ENCODE measurements at regions of chr17 and their contacts with region 1.

Region 1: GRCh38 chr17:57051886-57052361 is 33.1 kb upstream of the AKAP1 start:
- DNase-seq: no peak
- ATAC-seq: no peak
- H3K4me3 ChIP-seq: no peak overlapping the region
- H3K27ac ChIP-seq: no peak overlapping the region
- H3K4me1 ChIP-seq: peaks cover 7% of the 10 kb centered on the region
- H3K27me3 ChIP-seq: no peaks in the 10 kb centered on the region
- CTCF ChIP-seq: no peak

Region 2: DNA sequence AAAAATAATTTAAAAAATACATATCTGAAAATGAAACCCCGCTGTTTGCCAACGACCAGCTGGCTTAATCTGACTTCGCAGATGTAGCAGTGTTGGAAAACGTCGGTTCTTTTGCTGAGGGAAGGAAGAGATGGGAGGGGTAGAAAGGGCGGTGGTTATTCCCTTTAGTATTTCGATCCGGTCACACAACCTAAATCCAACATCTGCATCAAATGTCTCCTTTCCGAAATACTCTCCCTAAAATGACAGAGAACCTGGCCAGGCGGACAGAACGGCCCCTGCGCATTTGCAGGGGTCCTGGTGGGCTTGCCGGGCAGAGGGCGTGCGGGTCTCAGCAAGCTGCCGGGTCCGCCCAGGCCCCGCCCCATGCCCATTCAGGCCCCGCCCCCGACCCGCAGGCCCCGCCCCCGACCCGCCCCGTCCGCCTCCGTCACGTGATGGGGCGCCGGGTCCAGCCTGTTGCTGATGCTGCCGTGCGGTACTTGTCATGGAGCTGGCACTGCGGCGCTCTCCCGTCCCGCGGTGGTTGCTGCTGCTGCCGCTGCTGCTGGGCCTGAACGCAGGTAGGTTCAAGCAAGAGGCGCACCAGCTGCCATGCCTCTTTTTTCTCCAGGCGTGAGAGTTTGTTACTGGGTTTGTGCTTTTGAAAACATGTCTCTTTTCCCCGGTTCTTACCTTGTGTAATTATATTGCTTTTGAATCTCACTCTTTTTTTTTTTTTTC is 74.1 kb before region 1 on chr17 and contains the start of gene SCPEP1:
- CTCF ChIA-PET with region 1: interaction called, 5 read pairs
- POLR2A ChIA-PET with region 1: no interaction called
- intact Hi-C with region 1: loop called (anchors 1 kb)
- DNase-seq: peak; percentile 81
- ATAC-seq: peak; percentile 94
- H3K4me3 ChIP-seq: peak within 1 kb of the TSS; percentile 85
- H3K27ac ChIP-seq: no peak within 1 kb of the TSS
- H3K4me1 ChIP-seq: peaks cover 21% of the 10 kb centered on the region
- H3K27me3 ChIP-seq: no peaks in the 10 kb centered on the region
- CTCF ChIP-seq: no peak
- total RNA-seq, gene SCPEP1: 56.0 and 73.3 TPM in 2 replicates

Region 3: GRCh38 chr17:57009737-57010445 is 42.0 kb before region 1 on chr17:
- CTCF ChIA-PET with region 1: interaction called, 7 read pairs
- POLR2A ChIA-PET with region 1: no interaction called
- intact Hi-C with region 1: loop called (anchors 1 kb)
- DNase-seq: peak; percentile 78
- ATAC-seq: peak; percentile 96
- H3K4me3 ChIP-seq: peak overlapping the region; percentile 36
- H3K27ac ChIP-seq: no peak overlapping the region
- H3K4me1 ChIP-seq: peaks cover 3% of the 10 kb centered on the region; the same call in 1 of the 2 replicates
- H3K27me3 ChIP-seq: no peaks in the 10 kb centered on the region
- CTCF ChIP-seq: peak; percentile 88

Region 4: GRCh38 chr17:57016747-57017082 is 35.2 kb before region 1 on chr17:
- CTCF ChIA-PET with region 1: interaction called, 8 read pairs
- POLR2A ChIA-PET with region 1: no interaction called
- intact Hi-C with region 1: loop called (anchors 1 kb)
- DNase-seq: peak; percentile 99
- ATAC-seq: peak; percentile 90
- H3K4me3 ChIP-seq: no peak overlapping the region
- H3K27ac ChIP-seq: peak overlapping the region; percentile 65
- H3K4me1 ChIP-seq: peaks cover 27% of the 10 kb centered on the region
- H3K27me3 ChIP-seq: no peaks in the 10 kb centered on the region
- CTCF ChIP-seq: no peak

Region 5: GRCh38 chr17:57033295-57033694 is 18.6 kb before region 1 on chr17:
- CTCF ChIA-PET with region 1: interaction called, 4 read pairs
- POLR2A ChIA-PET with region 1: no interaction called
- intact Hi-C with region 1: loop called (anchors 2 kb)
- DNase-seq: peak; percentile 85
- ATAC-seq: peak; percentile 73
- H3K4me3 ChIP-seq: no peak overlapping the region
- H3K27ac ChIP-seq: peak overlapping the region; percentile 54
- H3K4me1 ChIP-seq: peaks cover 27% of the 10 kb centered on the region
- H3K27me3 ChIP-seq: no peaks in the 10 kb centered on the region
- CTCF ChIP-seq: no peak

Measured in PC-3 (cell line).